GM10248 (cell line): ENCODE measurements at regions of chr6 and their contacts with region 1.

Region 1: DNA sequence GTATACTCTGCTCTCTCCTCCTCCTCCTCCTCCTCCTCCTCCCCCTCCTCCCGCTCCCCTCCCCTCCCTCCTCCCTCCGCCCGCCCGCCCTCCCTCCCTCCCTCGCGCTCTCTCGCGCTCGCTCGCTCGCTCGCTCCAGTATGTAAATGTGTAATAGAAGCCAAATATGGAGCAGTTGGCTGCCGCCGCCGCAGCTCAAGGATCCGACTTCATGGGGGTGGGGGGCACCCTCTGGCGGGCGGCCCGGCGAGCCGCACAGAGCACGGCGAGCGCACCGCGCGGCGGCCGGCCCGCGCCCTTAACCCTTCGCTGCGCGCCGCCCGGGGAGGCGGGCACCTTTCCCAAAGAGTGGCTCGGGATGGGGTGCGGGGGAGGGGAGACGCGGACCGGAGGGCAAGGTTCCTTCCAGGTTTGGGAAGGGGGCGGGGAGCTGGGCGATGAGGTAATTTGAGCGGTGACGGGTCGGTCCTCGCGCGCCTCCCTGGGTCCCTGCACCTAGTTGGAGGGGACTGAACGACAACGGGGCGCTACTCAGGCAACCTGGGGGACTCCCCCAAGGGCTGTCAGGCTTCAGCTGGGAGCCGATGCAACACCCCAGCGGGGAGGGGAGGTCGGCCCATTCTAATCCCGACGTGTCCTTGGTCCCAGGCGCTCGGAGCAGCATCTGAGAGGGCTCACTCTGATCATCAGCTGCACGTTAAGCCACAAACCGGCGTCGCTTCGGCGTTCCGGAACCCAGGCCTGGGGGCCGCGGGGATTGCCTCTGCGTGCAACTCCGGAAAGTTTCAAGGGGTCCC is 409 bp upstream of the ATXN1 start:
- DNase-seq: peak; percentile 82
- CTCF ChIP-seq: peak; percentile 43

Region 2: GRCh38 chr6:15089555-15090144 is 1672.0 kb before region 1 on chr6:
- CTCF ChIA-PET with region 1: no interaction called
- POLR2A ChIA-PET with region 1: no interaction called
- DNase-seq: no peak
- CTCF ChIP-seq: no peak

Region 3: GRCh38 chr6:16286148-16286522 is 475.5 kb before region 1 on chr6:
- CTCF ChIA-PET with region 1: interaction called, 20 read pairs
- POLR2A ChIA-PET with region 1: no interaction called
- DNase-seq: peak; percentile 74
- CTCF ChIP-seq: peak; percentile 95

Region 4: GRCh38 chr6:16514249-16514648 is 247.4 kb before region 1 on chr6:
- CTCF ChIA-PET with region 1: interaction called, 22 read pairs
- POLR2A ChIA-PET with region 1: interaction called, 3 read pairs
- DNase-seq: peak; percentile 42
- CTCF ChIP-seq: peak; percentile 55

Region 5: GRCh38 chr6:16747232-16748024 is 14.2 kb before region 1 on chr6:
- CTCF ChIA-PET with region 1: interaction called, 15 read pairs
- POLR2A ChIA-PET with region 1: no interaction called
- DNase-seq: no peak
- CTCF ChIP-seq: no peak

Region 6: GRCh38 chr6:16964553-16965501 is 203.2 kb after region 1 on chr6:
- CTCF ChIA-PET with region 1: interaction called, 18 read pairs
- POLR2A ChIA-PET with region 1: no interaction called
- DNase-seq: peak; percentile 65
- CTCF ChIP-seq: peak; percentile 84

Region 7: GRCh38 chr6:17042422-17043147 is 280.9 kb after region 1 on chr6:
- CTCF ChIA-PET with region 1: no interaction called
- POLR2A ChIA-PET with region 1: no interaction called
- DNase-seq: no peak
- CTCF ChIP-seq: no peak